Esophagus squamous epithelium (tissue), 5 donors: ENCODE measurements at regions of chr19 and their contacts with region 1.

Region 1: DNA sequence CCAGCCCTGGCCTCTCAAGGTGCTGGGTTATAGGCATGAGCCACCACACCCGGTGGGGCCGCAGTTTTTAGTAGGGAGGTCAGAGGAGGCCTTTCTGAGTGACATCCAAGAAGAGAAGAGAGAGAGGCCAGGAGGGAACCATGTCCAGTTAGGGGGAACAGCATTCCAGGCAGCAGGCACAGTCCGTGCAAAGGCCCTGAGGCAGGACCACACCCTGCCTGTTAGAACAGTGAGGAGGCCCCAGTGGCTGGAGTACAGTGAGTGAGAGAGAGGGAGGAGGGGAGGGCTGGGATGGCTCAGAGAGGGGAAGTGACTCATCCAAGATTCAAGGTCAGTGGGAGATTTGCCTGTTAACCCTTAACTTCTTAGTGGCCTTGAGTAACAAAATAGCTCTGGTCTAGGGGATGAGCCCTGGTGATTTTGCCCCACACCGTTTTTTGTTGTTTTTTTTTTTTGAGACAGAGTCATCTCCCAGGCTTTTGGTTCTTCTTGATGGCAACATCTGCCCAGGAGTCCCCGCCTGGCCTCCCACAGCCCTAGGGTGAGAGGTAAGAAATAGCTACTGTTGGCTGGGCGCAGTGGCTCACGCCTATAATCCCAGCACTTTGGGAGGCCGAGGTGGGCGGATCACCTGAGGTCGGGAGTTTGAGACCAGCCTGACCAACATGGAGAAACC is 2.7 kb upstream of the PLIN3 start:
- DNase-seq: no peak
- H3K4me3 ChIP-seq: no peak overlapping the region
- H3K27ac ChIP-seq: peak overlapping the region; percentile 44 to 54 (median 48)
- H3K4me1 ChIP-seq: peaks cover 16 to 45% (median 20%) of the 10 kb centered on the region in 3 donors
- H3K27me3 ChIP-seq: no peaks in the 10 kb centered on the region
- CTCF ChIP-seq: no peak
- POLR2A ChIP-seq: no peak

Region 2: GRCh38 chr19:4933528-4933927 is 63.4 kb after region 1 on chr19:
- intact Hi-C with region 1: no loop called
- DNase-seq: no peak
- H3K4me3 ChIP-seq: no peak overlapping the region
- H3K27ac ChIP-seq: no peak overlapping the region
- H3K4me1 ChIP-seq: no peaks in the 10 kb centered on the region
- H3K27me3 ChIP-seq: no peaks in the 10 kb centered on the region
- CTCF ChIP-seq: no peak
- POLR2A ChIP-seq: no peak

Region 3: DNA sequence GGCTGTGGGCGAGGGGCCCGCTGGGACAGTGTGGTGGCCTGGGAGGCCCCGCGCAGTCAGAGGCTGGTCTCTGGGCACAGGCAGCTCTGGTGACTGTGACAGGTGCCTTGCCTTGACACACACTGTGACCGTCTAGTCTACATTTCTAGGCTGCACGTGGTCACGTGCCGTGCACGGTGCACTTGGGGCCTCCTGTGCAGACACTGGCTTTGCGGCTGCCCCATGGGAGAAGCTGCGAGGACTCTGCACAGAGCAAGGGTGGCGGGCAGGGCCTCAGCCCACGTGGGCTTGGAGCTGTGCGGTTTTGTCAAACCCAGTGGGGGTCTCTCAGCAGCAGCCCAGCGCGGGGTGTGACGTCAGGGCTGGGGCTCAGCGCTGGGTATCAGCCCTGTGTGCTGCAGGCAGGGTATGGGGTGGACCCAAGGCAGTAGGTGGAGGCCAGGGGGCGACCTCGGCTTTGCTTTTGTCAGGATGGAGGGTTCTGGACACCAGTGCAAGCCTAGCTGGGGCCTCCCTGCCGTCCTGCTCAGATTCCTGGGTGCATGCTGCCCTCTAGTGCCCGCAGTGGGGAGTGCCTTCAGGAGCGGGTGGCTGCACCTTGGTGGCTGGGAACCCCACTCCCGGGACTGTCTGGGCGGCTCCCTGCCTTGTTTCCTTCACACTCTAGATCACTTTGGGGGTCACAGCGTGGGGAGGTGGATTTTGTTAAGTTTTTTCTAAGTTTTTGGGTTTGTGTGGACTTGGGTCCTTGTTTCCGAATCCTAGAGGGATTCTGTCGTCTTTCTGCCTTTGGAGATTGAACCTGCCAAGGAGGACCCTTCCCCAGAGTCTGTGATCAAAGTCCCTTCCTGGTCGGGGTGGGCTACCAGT is 161.3 kb after region 1 on chr19:
- intact Hi-C with region 1: loop called (anchors 10 kb)
- DNase-seq: peak; percentile 19
- H3K4me3 ChIP-seq: no peak overlapping the region
- H3K27ac ChIP-seq: no peak overlapping the region
- H3K4me1 ChIP-seq: peaks cover 7 to 34% (median 12%) of the 10 kb centered on the region in 3 donors
- H3K27me3 ChIP-seq: no peaks in the 10 kb centered on the region
- CTCF ChIP-seq: peak; percentile 85 to 96 (median 94)
- POLR2A ChIP-seq: no peak